CD4-positive, alpha-beta memory T cell (primary cell): ENCODE measurements at regions of chr2 and their contacts with region 1.

Region 1: GRCh38 chr2:84302513-84303412 is 156.3 kb downstream of the SUCLG1 start:
- DNase-seq: peak in 4 of 5 donors; percentile 31 to 42 (median 34)
- H3K4me3 ChIP-seq: no peak overlapping the region
- H3K4me3 Mint-ChIP-seq: no peak overlapping the region
- H3K27ac ChIP-seq: no peak overlapping the region
- H3K27ac Mint-ChIP-seq: no peak overlapping the region
- H3K4me1 ChIP-seq: no peaks in the 10 kb centered on the region
- H3K4me1 Mint-ChIP-seq: no peaks in the 10 kb centered on the region
- H3K27me3 ChIP-seq: no peaks in the 10 kb centered on the region
- H3K27me3 Mint-ChIP-seq: peaks cover 11 to 13% of the 10 kb centered on the region in 2 donors

Region 2: GRCh38 chr2:84022810-84023431 is 279.8 kb before region 1 on chr2:
- CTCF ChIA-PET with region 1: interaction called, 6 read pairs
- POLR2A ChIA-PET with region 1: no interaction called
- intact Hi-C with region 1: loop called (anchors 1 kb)
- DNase-seq: peak in 4 of 5 donors; percentile 4 to 18 (median 10)
- H3K4me3 ChIP-seq: no peak overlapping the region
- H3K4me3 Mint-ChIP-seq: no peak overlapping the region
- H3K27ac ChIP-seq: no peak overlapping the region
- H3K27ac Mint-ChIP-seq: no peak overlapping the region
- H3K4me1 ChIP-seq: no peaks in the 10 kb centered on the region
- H3K4me1 Mint-ChIP-seq: no peaks in the 10 kb centered on the region
- H3K27me3 ChIP-seq: no peaks in the 10 kb centered on the region
- H3K27me3 Mint-ChIP-seq: peaks cover 2 to 4% of the 10 kb centered on the region in 2 donors

Region 3: DNA sequence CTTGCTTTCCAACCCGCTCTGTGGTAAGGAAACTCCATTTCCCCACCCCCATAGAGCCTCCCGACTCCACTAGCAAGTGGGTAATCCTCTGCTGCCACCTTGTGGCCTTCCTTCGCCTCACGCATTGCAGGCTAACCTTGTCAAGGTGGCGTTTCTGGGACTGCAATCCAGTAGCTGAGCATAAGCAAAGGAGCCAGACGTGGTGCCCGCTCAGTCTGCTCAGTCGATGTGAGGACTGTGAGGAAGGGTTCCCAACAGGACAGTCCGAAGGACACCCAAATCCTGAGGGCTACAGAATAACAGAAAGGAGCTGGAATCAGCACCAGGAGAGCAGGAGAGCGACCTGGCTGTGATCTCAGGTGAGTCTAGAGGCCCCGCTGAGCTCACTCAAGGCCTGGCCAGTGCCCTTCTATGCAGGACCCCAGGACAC is 12.2 kb after region 1 on chr2:
- CTCF ChIA-PET with region 1: interaction called, 35 read pairs
- POLR2A ChIA-PET with region 1: no interaction called
- intact Hi-C with region 1: no loop called
- DNase-seq: peak; percentile 55 to 63 (median 62)
- H3K4me3 ChIP-seq: no peak overlapping the region
- H3K4me3 Mint-ChIP-seq: no peak overlapping the region
- H3K27ac ChIP-seq: no peak overlapping the region
- H3K27ac Mint-ChIP-seq: no peak overlapping the region
- H3K4me1 ChIP-seq: no peaks in the 10 kb centered on the region
- H3K4me1 Mint-ChIP-seq: peaks cover 0 to 4% (median under 1%) of the 10 kb centered on the region in 4 donors
- H3K27me3 ChIP-seq: peaks cover 4% of the 10 kb centered on the region
- H3K27me3 Mint-ChIP-seq: peaks cover 8 to 16% of the 10 kb centered on the region in 2 donors

Region 4: DNA sequence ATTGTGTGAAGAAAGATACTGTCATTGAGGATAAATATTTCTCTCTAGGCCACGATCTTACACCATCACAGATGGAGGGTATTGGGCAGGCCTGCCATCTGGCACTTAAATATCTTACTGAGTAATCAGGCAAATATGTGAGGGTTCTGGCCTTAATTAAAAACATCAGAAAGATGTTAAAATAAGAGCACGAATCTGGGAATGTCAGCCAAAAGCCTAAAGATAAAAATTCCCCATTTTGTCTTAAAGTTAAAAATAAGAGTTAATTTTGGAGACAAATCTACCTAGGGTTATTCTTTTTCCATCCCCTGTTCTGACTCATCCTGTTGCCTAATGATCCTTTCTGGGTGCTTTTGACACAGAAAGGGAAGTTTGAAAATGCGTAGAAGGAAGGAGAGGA is 35.3 kb after region 1 on chr2:
- CTCF ChIA-PET with region 1: no interaction called
- POLR2A ChIA-PET with region 1: no interaction called
- intact Hi-C with region 1: no loop called
- DNase-seq: no peak
- H3K4me3 ChIP-seq: no peak overlapping the region
- H3K4me3 Mint-ChIP-seq: no peak overlapping the region
- H3K27ac ChIP-seq: no peak overlapping the region
- H3K27ac Mint-ChIP-seq: no peak overlapping the region
- H3K4me1 ChIP-seq: no peaks in the 10 kb centered on the region
- H3K4me1 Mint-ChIP-seq: no peaks in the 10 kb centered on the region
- H3K27me3 ChIP-seq: no peaks in the 10 kb centered on the region
- H3K27me3 Mint-ChIP-seq: peaks cover 6 to 8% of the 10 kb centered on the region in 2 donors